Vagina (tissue), 2 donors: ENCODE measurements at regions of chr6 and their contacts with region 1.

Region 1: DNA sequence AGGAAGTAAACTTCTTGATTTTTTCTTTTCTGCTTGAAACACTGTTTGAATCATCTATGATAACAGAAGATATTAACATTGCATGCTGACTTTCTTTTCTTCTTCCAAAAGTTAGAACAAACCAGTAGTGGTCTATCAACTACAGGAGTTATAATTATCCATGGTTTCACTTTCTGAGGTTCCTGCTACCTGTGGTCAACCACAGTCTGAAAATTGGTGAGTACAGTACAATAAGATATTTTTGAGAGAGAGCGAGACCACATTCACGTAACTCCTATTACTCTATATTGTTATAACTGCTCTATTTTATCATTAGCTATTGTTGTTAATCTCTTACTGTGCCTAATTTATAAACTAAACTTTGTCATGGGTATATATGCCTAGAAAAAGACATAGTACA is 86.1 kb downstream of the MAP7 start:
- DNase-seq: no peak
- H3K4me3 ChIP-seq: no peak overlapping the region
- H3K27ac ChIP-seq: no peak overlapping the region
- H3K4me1 ChIP-seq: no peaks in the 10 kb centered on the region
- H3K27me3 ChIP-seq: no peaks in the 10 kb centered on the region
- CTCF ChIP-seq: no peak
- POLR2A ChIP-seq: no peak

Region 2: DNA sequence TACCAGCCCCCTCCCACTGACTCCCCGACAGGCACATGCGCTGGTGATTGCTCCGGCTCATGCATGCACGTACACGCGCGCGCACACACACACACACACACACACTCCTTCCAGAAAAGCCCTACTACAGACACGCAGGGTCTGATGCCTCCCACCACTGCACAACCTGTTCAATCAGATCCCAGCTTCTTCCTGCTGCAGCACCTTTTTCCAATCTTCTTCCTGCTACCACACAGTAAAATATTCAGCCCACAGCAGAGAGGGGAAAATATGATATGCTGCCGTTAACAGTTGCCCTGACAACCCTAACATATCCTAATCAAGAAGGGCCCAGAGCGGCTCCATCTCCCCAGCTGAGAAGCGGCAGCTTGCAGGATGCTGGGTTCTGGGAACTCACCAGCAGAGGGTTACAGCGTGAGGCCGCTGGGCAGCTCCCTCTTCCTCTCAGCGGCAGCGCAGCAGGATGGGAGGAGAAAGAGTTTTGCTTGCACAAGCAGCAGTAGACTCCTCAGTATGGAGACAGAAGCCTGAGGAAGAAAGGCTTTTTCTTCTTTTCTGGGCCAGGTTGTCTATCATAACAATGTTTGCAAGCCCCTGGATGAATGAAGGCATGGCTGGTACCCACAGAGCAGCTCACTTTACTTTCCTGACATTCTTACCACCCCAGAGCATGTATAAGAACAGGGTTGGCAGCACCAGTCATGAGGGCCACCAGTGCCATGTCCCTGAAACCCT is 62.2 kb after region 1 on chr6:
- intact Hi-C with region 1: no loop called
- DNase-seq: no peak
- H3K4me3 ChIP-seq: no peak overlapping the region
- H3K27ac ChIP-seq: no peak overlapping the region
- H3K4me1 ChIP-seq: peaks cover 23% of the 10 kb centered on the region
- H3K27me3 ChIP-seq: no peaks in the 10 kb centered on the region
- CTCF ChIP-seq: no peak
- POLR2A ChIP-seq: no peak

Region 3: GRCh38 chr6:136889271-136890191 is 425.4 kb after region 1 on chr6:
- intact Hi-C with region 1: loop called (anchors 5 kb)
- DNase-seq: no peak
- H3K4me3 ChIP-seq: no peak overlapping the region
- H3K27ac ChIP-seq: no peak overlapping the region
- H3K4me1 ChIP-seq: no peaks in the 10 kb centered on the region
- H3K27me3 ChIP-seq: no peaks in the 10 kb centered on the region
- CTCF ChIP-seq: no peak
- POLR2A ChIP-seq: no peak